Common myeloid progenitor, CD34-positive (primary cell): ENCODE measurements at regions of chr17 and their contacts with region 1.

Region 1: DNA sequence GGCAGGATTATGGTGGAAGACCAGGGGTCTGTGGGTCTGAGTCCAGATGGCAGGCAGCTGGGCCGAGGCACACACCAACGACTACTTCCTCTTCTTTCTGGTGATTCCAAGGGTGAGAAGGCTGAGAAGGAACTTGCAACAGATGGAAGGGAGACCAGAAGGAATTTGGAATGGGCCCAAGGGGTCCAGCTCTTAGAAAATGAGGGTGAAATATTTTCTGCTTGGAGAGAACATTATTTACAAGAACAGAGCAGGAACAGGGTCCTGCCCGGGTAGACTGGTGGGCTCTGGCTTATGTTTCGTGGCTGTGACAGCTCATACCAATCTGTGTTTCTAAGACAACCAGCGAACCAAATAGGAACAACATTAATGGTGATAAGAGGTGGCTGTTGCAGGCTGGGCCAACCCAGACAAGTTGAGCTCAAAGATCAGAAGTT is 36.6 kb downstream of the CCDC42 start:
- DNase-seq: peak; percentile 71 to 93 (median 91)
- H3K4me3 ChIP-seq: peak overlapping the region in 3 of 7 experiments; percentile 2 to 37 (median 8)
- H3K27ac ChIP-seq: peak overlapping the region; percentile 82 to 85
- H3K4me1 ChIP-seq: peaks cover 6 to 45% (median 23%) of the 10 kb centered on the region in 4 experiments
- H3K27me3 ChIP-seq: no peaks in the 10 kb centered on the region

Region 2: GRCh38 chr17:8681170-8681949 is 26.7 kb before region 1 on chr17:
- CTCF ChIA-PET with region 1: no interaction called
- POLR2A ChIA-PET with region 1: no interaction called
- DNase-seq: no peak
- H3K4me3 ChIP-seq: no peak overlapping the region
- H3K27ac ChIP-seq: no peak overlapping the region
- H3K4me1 ChIP-seq: no peaks in the 10 kb centered on the region
- H3K27me3 ChIP-seq: peaks cover 0 to 2% (median 0%) of the 10 kb centered on the region in 5 experiments

Region 3: DNA sequence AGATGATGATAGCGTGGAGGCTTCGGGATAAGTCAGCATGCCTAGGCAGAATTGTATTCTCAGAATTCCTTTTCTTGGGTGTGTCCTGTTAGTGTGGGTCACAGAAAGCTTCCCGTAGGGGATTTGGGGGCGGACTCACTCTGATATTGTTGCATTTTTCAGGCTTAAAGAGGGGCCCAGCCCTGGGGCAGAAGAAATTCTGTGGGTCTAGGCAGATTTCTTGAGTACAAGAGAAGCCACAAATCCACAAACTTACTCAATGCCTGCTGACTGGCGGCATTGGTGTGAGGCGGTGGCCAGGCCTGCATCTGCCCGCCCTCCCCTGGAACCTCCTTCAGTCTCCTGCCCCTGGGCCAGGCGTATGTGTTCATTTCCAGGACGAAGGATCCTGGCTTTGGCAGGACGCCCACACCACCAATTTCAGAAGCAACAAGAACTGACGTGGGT is 19.0 kb after region 1 on chr17:
- CTCF ChIA-PET with region 1: interaction called, 12 read pairs
- POLR2A ChIA-PET with region 1: no interaction called
- DNase-seq: peak in 2 of 3 donors; percentile 55 to 59
- H3K4me3 ChIP-seq: peak overlapping the region in 2 of 7 experiments; percentile 33 to 36
- H3K27ac ChIP-seq: no peak overlapping the region
- H3K4me1 ChIP-seq: peaks cover 2 to 26% (median 19%) of the 10 kb centered on the region in 4 experiments
- H3K27me3 ChIP-seq: no peaks in the 10 kb centered on the region